IMR-90 (cell line): ENCODE measurements at regions of chr18 and their contacts with region 1.

Region 1: DNA sequence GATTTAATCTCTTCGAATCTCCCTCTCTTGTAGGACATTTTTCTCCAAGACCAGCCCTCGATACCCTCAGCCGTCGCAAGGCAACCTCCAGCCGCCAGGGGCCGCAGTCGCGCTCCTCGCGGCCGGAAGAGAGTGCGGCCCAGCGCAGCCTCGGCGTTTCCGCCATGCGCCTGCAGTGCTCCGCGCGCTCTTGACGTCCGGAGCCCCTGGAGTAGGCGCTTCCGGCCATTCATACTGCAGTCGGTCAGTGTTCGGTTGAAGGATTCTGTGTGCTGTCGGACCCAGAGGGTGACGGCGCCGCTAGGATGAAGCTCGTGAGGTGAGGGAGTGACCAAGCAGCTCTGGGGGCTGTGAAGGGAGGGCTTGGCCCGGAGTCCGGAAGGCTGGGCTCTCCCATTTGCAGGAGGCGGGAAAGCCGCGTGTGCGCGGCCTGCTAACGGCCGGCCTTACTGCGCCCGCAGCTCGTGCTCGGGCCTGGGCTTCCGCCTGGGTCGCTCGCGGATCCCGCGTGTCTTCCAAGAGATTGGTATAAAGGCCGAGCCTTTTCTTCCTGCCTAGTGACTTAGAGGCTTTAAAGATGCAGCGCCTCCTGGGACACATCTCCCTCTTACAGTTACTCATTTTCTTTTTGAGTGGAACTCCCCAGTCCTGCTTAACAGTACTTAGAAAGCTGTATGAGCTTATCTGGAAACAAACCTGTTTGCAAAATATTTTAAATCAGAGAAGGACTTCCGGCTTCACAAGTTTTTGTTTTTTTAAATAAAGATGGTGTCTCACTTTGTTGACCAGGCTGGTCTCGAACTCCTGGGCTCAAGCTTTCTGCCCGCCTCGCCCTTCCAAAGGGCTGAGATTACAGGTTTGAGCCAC is at the start of gene SNRPD1:
- DNase-seq: peak; percentile 90
- ATAC-seq: peak; percentile 100
- H3K4me3 ChIP-seq: peak within 1 kb of the TSS; percentile 85
- H3K27ac ChIP-seq: peak within 1 kb of the TSS; percentile 95
- H3K4me1 ChIP-seq: peaks cover 2% of the 10 kb centered on the region; the same call in 1 of the 2 replicates
- H3K27me3 ChIP-seq: no peaks in the 10 kb centered on the region
- CTCF ChIP-seq: peak; percentile 96
- POLR2A ChIP-seq: peak; percentile 92
- RAD21 ChIP-seq: peak; percentile 27; the same call in 1 of the 2 replicates
- total RNA-seq, gene SNRPD1: 6.8 and 24.7 TPM in 2 replicates

Region 2: DNA sequence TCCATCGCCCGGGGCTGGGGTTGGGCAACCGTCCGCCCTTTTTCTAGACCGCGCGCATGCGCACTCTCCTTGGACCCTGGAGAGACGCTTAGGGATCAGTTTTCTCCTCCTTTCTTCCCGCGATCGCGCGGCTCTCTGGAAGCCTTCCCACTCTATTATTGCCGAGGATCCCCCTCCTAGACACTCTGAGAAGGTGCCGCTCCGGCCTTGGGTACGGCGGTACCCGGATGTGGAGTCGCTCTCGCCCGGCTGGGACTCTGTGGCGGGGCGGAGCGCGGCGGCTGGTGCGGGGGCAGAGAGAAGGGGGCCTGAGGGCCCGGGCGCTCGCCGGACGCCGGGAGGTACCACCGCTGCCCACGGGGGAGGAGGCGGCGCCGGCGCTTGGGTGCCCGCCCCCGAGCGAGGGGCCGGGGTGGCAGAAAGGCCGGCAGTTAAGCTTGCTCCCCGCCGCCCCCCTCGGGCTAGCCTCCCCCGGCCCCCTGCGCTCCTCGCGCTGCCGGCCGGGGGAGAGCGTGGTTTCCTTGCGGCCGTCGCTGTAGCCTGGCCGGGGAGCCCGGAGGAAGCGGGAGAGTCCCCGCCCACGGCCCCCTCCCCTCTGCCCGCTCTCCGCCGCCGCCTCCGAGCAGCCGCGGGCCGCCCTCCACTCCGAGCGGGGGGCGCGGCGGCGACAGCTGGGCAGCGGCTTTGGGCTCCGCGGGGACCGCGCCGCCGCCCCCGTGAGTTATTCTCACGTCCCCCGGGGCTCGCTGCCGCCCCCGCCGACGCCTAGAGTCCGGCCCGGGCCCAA is 128.6 kb after region 1 on chr18 and contains the start of gene MIB1:
- CTCF ChIA-PET with region 1: no interaction called
- POLR2A ChIA-PET with region 1: no interaction called
- dilution Hi-C with region 1: no loop called
- in situ Hi-C with region 1: no loop called
- intact Hi-C with region 1: loop called (anchors 10 kb)
- DNase-seq: peak; percentile 41
- ATAC-seq: peak; percentile 80
- H3K4me3 ChIP-seq: peak within 1 kb of the TSS; percentile 78
- H3K27ac ChIP-seq: peak within 1 kb of the TSS; percentile 97
- H3K4me1 ChIP-seq: no peaks in the 10 kb centered on the region; the same call in 1 of the 2 replicates
- H3K27me3 ChIP-seq: no peaks in the 10 kb centered on the region
- CTCF ChIP-seq: no peak
- POLR2A ChIP-seq: peak; percentile 71
- RAD21 ChIP-seq: no peak
- total RNA-seq, gene MIB1: 80.1 and 83.6 TPM in 2 replicates